ENCODE measurements at regions of chr4 and their contacts with region 1.

Region 1: GRCh38 chr4:73729534-73730165 is 10.7 kb upstream of the CXCL8 start:
- DNase-seq: peak; percentile 67 to 80 (median 76)
- H3K4me3 ChIP-seq: no peak overlapping the region
- H3K27ac ChIP-seq: no peak overlapping the region
- H3K4me1 ChIP-seq: peaks cover 7 to 42% (median 18%) of the 10 kb centered on the region in 4 experiments
- H3K27me3 ChIP-seq: no peaks in the 10 kb centered on the region

Region 2: DNA sequence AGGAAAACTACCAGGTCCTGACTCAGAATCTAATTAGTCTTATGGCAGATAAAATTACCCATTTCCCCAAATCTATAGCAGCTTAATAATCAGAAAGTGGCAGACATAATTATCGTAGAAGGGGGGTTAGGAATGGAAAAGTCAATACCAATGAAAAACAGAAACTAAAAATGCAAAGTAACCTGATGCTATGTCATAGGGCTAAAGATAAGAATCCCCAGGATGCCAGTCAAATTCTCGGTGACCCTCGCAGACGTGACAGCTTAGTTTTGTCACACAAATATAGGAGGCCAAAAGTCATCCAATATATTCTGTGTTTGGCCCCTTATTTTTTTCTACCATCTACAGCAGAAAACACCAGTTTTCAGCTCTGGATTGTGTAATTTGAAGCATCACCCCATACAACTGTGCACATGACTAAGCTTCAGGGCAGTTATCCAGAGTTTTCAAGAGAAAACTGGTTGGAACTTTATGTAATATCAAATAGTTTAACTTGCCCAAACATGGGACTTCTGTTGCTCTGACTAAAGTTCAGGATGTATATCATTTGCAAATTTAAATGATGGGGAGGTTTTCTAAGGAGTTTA is 140.3 kb before region 1 on chr4:
- CTCF ChIA-PET with region 1: no interaction called
- POLR2A ChIA-PET with region 1: no interaction called
- DNase-seq: no peak
- H3K4me3 ChIP-seq: no peak overlapping the region
- H3K27ac ChIP-seq: no peak overlapping the region
- H3K4me1 ChIP-seq: peaks cover 0 to 2% (median 0%) of the 10 kb centered on the region in 4 experiments
- H3K27me3 ChIP-seq: no peaks in the 10 kb centered on the region

Region 3: DNA sequence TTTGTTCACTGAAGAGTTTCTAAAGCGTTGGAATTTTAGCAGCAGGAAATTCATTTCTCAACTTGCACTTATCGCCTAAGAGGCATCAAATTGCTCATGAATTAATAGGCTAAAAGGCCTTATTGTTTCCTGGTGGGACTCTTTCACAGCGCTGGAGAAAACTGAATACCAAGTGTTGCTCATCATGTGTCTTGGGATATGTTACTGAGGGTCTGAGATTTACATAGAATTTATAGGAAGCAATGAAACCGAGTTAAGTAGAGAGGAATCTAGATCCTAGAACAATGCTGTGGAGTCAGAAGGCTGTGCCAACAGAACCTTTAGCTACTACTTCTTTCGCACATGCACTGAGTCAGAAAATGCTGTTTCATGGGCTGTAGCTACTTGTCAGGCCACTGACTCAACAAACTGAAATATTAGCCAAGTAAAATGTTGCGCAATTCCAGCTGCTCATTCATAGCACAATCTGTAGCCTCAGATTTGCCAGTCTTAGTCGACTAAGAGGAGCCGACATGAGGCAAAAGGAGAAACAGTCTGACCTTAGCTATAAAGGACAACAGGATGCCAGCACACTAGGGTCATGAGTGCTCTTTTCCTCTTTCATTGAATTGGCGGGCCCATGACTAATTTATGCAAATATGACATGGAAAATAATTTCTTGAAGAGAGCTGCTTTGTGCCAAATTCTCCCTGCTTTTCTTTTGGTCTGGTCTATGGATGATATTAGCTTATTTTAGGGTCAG is 25.2 kb before region 1 on chr4:
- CTCF ChIA-PET with region 1: interaction called, 13 read pairs
- POLR2A ChIA-PET with region 1: no interaction called
- DNase-seq: peak; percentile 64 to 93 (median 91)
- H3K4me3 ChIP-seq: peak overlapping the region in 1 of 7 experiments; percentile 5
- H3K27ac ChIP-seq: peak overlapping the region in 1 of 2 experiments; percentile 35
- H3K4me1 ChIP-seq: peaks cover 7 to 47% (median 37%) of the 10 kb centered on the region in 4 experiments
- H3K27me3 ChIP-seq: no peaks in the 10 kb centered on the region

Region 4: GRCh38 chr4:73715659-73716058 is 14.0 kb before region 1 on chr4:
- CTCF ChIA-PET with region 1: interaction called, 17 read pairs
- POLR2A ChIA-PET with region 1: no interaction called
- DNase-seq: no peak
- H3K4me3 ChIP-seq: no peak overlapping the region
- H3K27ac ChIP-seq: no peak overlapping the region
- H3K4me1 ChIP-seq: peaks cover 0 to 20% (median 8%) of the 10 kb centered on the region in 4 experiments
- H3K27me3 ChIP-seq: no peaks in the 10 kb centered on the region

Region 5: DNA sequence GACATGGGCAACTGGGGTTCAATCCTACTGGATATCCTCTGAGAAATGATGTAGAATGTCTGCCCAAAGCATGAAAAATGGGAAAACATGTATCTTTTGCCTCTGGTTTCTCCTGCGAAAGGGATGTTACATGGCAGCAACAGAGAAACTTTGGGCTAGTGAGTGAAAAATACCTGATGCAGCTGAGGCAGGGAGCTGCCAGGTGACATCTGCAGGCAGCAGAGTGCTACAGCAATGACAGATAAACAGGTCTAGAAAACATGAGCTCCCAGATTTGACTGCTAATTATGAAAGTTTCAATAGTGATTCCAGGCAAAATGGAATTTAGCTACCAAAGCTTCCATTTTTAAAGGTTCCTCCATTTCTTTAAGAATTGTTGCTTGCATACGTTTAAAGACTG is 134.7 kb after region 1 on chr4:
- CTCF ChIA-PET with region 1: interaction called, 33 read pairs
- POLR2A ChIA-PET with region 1: no interaction called
- DNase-seq: peak in 2 of 3 donors; percentile 57 to 60
- H3K4me3 ChIP-seq: no peak overlapping the region
- H3K27ac ChIP-seq: no peak overlapping the region
- H3K4me1 ChIP-seq: peaks cover 0 to 12% (median 7%) of the 10 kb centered on the region in 4 experiments
- H3K27me3 ChIP-seq: peaks cover 0 to under 1% (median 0%) of the 10 kb centered on the region in 5 experiments

Region 6: GRCh38 chr4:74237425-74237966 is 507.8 kb after region 1 on chr4:
- CTCF ChIA-PET with region 1: no interaction called
- POLR2A ChIA-PET with region 1: no interaction called
- DNase-seq: no peak
- H3K4me3 ChIP-seq: no peak overlapping the region
- H3K27ac ChIP-seq: no peak overlapping the region
- H3K4me1 ChIP-seq: peaks cover 0 to 4% (median 0%) of the 10 kb centered on the region in 4 experiments
- H3K27me3 ChIP-seq: no peaks in the 10 kb centered on the region

Measured in common myeloid progenitor, CD34-positive (primary cell).